Gastrocnemius medialis (tissue), 4 donors: ENCODE measurements at regions of chr16 and their contacts with region 1.

Region 1: DNA sequence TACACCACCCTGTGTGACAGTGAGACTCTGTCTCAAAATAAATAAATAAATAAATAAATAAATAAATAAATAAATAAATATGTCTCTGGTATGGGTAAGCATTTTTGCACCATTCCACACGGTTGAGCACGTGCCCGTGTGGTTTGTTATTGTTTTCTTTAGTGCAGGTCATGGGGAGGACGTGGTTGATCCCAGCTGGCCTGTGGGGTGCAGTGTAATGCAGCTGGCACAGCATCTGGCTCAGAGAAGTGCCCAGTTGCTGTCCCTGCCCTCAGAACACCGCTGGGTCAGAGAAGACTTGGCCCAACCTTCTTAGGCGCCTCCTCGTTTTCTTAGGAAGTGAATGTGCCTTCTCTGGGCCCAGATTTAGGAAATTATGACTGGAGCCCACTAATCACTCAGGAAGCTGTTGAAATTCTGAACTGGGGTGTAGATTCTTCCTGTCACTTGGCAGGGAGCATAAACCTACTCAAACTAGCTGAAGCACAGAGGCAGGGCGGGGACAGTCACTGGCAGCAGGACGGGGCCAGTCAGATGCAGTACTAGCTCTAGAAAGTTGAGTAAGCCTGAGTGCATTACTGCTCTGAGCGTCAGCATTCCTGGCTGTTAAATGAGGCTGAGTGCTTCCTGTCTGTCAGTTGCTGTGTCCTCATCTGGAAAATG is 85.9 kb downstream of the SNX29 start:
- DNase-seq: peak; percentile 71 to 90
- ATAC-seq: peak; percentile 85 to 89
- H3K4me3 ChIP-seq: no peak overlapping the region
- H3K27ac ChIP-seq: peak overlapping the region; percentile 58 to 77 (median 72)
- H3K4me1 ChIP-seq: peaks cover 12 to 17% of the 10 kb centered on the region in 2 donors
- H3K27me3 ChIP-seq: no peaks in the 10 kb centered on the region
- CTCF ChIP-seq: no peak
- POLR2A ChIP-seq: no peak

Region 2: DNA sequence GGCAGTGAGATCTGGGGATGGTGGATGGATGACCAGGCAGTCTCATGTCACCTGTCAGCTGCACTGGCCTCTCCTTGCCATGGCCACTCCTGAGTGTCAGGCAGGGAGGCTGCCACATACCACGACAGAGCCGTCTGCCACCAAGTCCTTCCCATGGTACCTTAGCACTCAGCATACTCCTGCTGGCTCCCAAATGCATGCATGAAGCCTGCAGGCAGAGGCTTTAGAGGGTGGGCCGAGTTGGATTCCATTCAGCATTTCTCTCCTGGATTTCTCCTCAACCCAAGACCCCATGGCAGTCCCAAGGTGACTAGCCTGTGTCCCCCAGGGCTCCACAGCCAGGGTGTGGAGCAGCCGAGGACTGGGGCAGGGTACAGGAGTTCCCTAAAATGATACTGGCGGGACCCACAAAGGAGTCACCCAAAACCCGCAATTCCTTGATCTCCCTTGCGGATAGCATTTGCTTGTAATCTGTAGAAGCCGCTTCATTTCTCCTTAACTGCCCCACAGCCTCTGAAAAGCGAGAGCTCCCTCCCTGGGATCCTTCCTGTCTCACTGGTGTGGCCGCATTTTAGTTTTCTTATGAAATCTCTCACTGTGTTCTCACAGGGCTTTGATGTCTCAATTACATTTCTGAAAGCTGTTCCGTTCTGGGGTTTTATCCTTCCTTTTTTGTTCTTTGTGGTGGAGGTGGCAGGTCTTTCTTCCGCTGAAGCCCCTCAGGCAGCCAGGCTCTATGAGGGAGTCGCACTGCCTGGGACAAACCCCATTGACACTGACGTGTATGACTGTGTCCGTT is 947.9 kb before region 1 on chr16:
- in situ Hi-C with region 1: no loop called
- intact Hi-C with region 1: no loop called
- DNase-seq: no peak
- ATAC-seq: no peak
- H3K4me3 ChIP-seq: no peak overlapping the region
- H3K27ac ChIP-seq: no peak overlapping the region
- H3K4me1 ChIP-seq: no peaks in the 10 kb centered on the region
- H3K27me3 ChIP-seq: no peaks in the 10 kb centered on the region
- CTCF ChIP-seq: no peak
- POLR2A ChIP-seq: no peak

Region 3: GRCh38 chr16:11955713-11956123 is 106.8 kb before region 1 on chr16:
- in situ Hi-C with region 1: no loop called
- intact Hi-C with region 1: loop called (anchors 2 kb)
- DNase-seq: no peak
- ATAC-seq: no peak
- H3K4me3 ChIP-seq: no peak overlapping the region
- H3K27ac ChIP-seq: no peak overlapping the region
- H3K4me1 ChIP-seq: no peaks in the 10 kb centered on the region
- H3K27me3 ChIP-seq: no peaks in the 10 kb centered on the region
- CTCF ChIP-seq: no peak
- POLR2A ChIP-seq: no peak

Region 4: GRCh38 chr16:11977376-11978041 is 85.0 kb before region 1 on chr16:
- in situ Hi-C with region 1: loop called in 3 of 4 experiments (anchors 5 to 10 kb)
- intact Hi-C with region 1: loop called (anchors 2 kb)
- DNase-seq: peak in 1 of 2 donors; percentile 43
- ATAC-seq: peak; percentile 54 to 59
- H3K4me3 ChIP-seq: peak overlapping the region; percentile 85 to 91 (median 88)
- H3K27ac ChIP-seq: peak overlapping the region; percentile 85 to 91 (median 89)
- H3K4me1 ChIP-seq: peaks cover 17 to 24% of the 10 kb centered on the region in 2 donors
- H3K27me3 ChIP-seq: no peaks in the 10 kb centered on the region
- CTCF ChIP-seq: no peak
- POLR2A ChIP-seq: peak; percentile 44 to 53